ENCODE measurements at regions of chr18 and their contacts with region 1.

Region 1: GRCh38 chr18:31134988-31135529 is 27.6 kb downstream of the DSC1 start:
- DNase-seq: no peak
- H3K4me3 Mint-ChIP-seq: no peak overlapping the region
- H3K27ac Mint-ChIP-seq: no peak overlapping the region
- H3K4me1 Mint-ChIP-seq: no peaks in the 10 kb centered on the region
- H3K27me3 Mint-ChIP-seq: no peaks in the 10 kb centered on the region
- CTCF ChIP-seq: no peak

Region 2: DNA sequence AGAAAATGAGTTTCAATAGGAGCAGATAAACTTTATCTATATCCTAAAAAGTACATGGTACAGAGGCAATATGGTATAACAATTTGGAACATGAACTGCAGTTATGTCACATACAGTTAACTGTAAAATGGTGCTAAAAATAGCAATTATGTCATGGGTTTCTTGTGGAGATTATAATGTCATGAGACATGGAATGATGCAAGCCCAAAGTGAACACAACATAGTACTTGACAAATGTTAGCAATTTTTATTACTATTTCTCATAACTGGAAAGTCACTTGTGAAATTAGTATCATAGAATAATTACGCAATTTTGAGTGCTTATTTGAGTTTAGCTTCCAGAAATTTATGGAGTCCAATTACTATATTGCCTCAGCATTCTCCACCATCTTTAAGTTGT is 1356.0 kb before region 1 on chr18:
- CTCF ChIA-PET with region 1: no interaction called
- intact Hi-C with region 1: no loop called
- DNase-seq: no peak
- H3K4me3 Mint-ChIP-seq: no peak overlapping the region
- H3K27ac Mint-ChIP-seq: no peak overlapping the region
- H3K4me1 Mint-ChIP-seq: no peaks in the 10 kb centered on the region
- H3K27me3 Mint-ChIP-seq: no peaks in the 10 kb centered on the region
- CTCF ChIP-seq: no peak

Region 3: DNA sequence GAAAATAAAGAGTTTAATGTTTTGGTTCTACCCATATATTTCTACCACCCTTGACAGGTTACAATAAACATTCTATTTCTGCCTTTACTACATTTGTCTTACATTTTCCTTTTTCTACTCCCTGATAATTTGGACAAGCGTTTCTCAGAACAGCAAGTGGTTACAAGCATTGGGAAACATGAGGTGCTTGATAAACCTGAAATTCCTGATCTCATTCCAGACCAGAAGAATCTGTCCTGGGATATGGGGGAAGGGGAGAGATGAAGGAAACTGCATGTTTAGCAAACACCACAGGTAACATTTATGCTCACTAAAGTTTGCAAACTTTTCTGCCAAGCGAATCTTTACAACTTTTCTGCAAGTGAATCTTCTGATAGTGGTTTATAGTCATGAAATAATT is 55.9 kb after region 1 on chr18:
- CTCF ChIA-PET with region 1: no interaction called
- intact Hi-C with region 1: loop called (anchors 5 kb)
- DNase-seq: peak; percentile 26
- H3K4me3 Mint-ChIP-seq: peak overlapping the region; percentile 23
- H3K27ac Mint-ChIP-seq: peak overlapping the region; percentile 66
- H3K4me1 Mint-ChIP-seq: peaks cover 18% of the 10 kb centered on the region
- H3K27me3 Mint-ChIP-seq: no peaks in the 10 kb centered on the region
- CTCF ChIP-seq: no peak

Region 4: DNA sequence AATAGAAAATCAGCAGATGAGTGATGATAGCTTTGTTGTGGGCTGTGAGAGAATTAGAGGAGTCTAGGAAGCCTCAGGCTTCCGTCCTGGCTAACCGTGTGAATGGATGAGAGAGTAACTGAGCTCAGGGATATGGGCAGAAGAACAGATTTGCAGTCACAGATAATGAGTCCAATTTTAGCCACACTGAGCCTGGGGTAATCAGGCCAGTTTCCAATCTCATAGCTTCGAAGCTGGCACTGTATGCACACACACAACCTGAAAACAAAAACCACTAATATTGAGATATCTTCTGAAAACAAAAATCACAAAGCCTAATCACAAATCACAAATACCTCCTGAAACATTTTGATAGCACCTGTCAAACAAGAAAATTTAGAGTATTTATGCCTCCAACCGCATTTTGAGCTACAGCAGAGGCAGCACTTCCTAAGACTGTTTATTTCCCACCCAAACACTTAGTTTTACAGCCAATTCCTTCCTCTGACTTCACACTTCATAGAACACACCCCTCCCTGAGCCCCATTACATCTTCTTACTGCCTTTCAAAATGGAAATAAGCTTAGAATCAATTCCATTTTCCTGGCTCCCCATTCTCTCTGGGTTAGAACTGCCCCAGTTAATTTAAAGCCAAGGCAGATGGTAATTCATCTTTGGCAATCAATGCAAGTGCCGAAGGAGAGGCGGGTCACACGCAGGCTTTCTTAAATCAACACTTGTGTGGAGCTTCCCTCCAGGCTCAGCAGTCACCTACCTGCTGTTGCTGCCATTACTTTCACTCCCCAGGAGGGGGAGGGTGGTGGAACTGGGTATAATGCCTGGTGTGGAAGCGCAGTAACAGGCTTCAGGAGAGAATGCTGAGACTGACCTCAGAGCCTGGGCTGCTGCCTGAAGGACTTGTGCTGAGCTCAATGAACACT is 475.5 kb after region 1 on chr18:
- CTCF ChIA-PET with region 1: no interaction called
- intact Hi-C with region 1: no loop called
- DNase-seq: peak; percentile 31
- H3K4me3 Mint-ChIP-seq: no peak overlapping the region
- H3K27ac Mint-ChIP-seq: no peak overlapping the region
- H3K4me1 Mint-ChIP-seq: peaks cover 5% of the 10 kb centered on the region
- H3K27me3 Mint-ChIP-seq: no peaks in the 10 kb centered on the region
- CTCF ChIP-seq: peak; percentile 37

Measured in Calu3 (cell line).